WTC11 (cell line): ENCODE measurements at regions of chr16 and their contacts with region 1.

Region 1: DNA sequence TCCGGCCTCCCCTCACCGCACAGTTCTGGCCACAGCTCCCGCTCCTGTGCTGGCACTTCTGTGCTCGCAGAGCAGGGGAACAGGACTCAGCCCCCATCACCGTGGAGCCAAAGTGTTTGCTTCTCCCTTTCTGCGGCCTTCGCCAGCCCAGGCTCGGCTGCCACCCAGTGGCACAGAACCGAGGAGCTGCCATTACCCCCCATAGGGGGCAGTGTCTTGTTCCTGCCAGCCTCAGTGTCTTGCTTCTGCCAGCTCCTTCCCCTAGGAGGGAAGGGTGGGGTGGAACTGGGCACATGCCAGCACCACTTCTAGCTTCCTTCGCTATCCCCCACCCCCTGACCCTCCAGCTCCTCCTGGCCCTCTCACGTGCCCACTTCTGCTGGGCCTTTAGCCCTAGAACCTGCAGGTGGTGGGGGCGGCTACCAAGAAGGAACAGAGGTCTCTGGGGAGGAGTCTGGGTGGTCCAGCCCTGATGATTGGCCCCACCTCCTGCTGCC is 645 bp upstream of the ELMO3 start:
- DNase-seq: peak; percentile 53
- ATAC-seq: peak; percentile 13
- H3K4me3 Mint-ChIP-seq: peak overlapping the region; percentile 55
- H3K27ac Mint-ChIP-seq: peak overlapping the region; percentile 85; the same call in 1 of the 2 replicates
- H3K4me1 Mint-ChIP-seq: peaks cover 13% of the 10 kb centered on the region
- H3K27me3 Mint-ChIP-seq: no peaks in the 10 kb centered on the region
- CTCF ChIP-seq: no peak

Region 2: GRCh38 chr16:67150833-67151396 is 47.4 kb before region 1 on chr16 and contains the start of gene B3GNT9:
- CTCF ChIA-PET with region 1: interaction called, 23 read pairs
- POLR2A ChIA-PET with region 1: no interaction called
- DNase-seq: peak; percentile 77
- ATAC-seq: peak; percentile 36
- H3K4me3 Mint-ChIP-seq: peak within 1 kb of the TSS; percentile 75
- H3K27ac Mint-ChIP-seq: no peak within 1 kb of the TSS
- H3K4me1 Mint-ChIP-seq: peaks cover 8% of the 10 kb centered on the region
- H3K27me3 Mint-ChIP-seq: peaks cover 58% of the 10 kb centered on the region
- CTCF ChIP-seq: no peak
- total RNA-seq, gene B3GNT9: 6.4 to 7.8 TPM (median 7.6 TPM) in 3 replicates

Region 3: GRCh38 chr16:67183627-67184328 is 14.5 kb before region 1 on chr16 and contains the start of gene MATCAP1:
- CTCF ChIA-PET with region 1: interaction called, 49 read pairs
- POLR2A ChIA-PET with region 1: no interaction called
- DNase-seq: peak; percentile 94
- ATAC-seq: peak; percentile 90
- H3K4me3 Mint-ChIP-seq: peak within 1 kb of the TSS; percentile 82
- H3K27ac Mint-ChIP-seq: no peak within 1 kb of the TSS
- H3K4me1 Mint-ChIP-seq: peaks cover 20% of the 10 kb centered on the region
- H3K27me3 Mint-ChIP-seq: peaks cover 31% of the 10 kb centered on the region
- CTCF ChIP-seq: no peak
- total RNA-seq, gene MATCAP1: 40.8 to 54.3 TPM (median 50.5 TPM) in 3 replicates

Region 4: DNA sequence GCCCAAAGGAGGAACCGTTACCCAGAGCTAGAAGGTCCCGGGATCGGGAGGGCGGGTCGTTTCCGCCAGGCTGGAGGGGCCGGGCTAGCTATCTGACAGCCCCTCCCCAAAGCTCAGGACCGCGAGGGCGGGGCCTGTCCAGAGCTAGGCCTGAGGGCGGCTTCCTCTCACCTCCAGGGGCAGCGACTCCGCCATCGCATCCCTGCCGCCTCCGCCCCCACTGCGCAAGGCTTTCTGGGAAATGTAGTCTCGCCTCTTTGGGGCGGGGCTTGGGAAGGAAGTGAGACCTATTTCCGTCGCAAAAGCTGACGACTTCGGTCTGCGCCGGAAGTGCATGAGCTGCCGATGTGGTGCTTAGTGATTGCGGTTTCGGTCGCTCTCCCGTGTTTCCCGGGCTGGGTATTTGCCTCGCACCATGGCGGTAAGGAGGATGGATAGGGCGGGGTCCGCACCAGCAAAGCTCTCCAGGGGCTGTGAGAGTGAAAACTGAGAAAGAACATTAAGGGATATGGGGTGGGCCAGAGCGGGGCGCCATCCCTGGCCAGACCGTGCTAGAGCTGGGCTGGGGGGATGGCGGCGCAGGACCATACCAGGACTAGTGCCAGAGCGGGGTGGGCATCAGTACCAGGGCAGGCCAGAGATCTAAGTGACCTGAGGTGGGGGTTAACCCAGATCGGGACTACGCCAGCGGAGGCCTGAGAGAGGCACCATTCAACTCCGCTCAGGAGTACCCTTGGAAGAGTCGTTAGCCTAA is 28.7 kb after region 1 on chr16 and contains the start of gene TMEM208:
- CTCF ChIA-PET with region 1: interaction called, 41 read pairs
- POLR2A ChIA-PET with region 1: interaction called, 5 read pairs
- DNase-seq: peak; percentile 100
- ATAC-seq: peak; percentile 99
- H3K4me3 Mint-ChIP-seq: peak within 1 kb of the TSS; percentile 97
- H3K27ac Mint-ChIP-seq: peak within 1 kb of the TSS; percentile 98
- H3K4me1 Mint-ChIP-seq: peaks cover 15% of the 10 kb centered on the region
- H3K27me3 Mint-ChIP-seq: peaks cover 28% of the 10 kb centered on the region
- CTCF ChIP-seq: no peak
- total RNA-seq, gene TMEM208: 37.4 to 48.4 TPM (median 43.1 TPM) in 3 replicates